Activated CD8-positive, alpha-beta T cell treated with anti-CD3 and anti-CD28 coated beads for 36 hours (primary cell): ENCODE measurements at regions of chr6 and their contacts with region 1.

Region 1: DNA sequence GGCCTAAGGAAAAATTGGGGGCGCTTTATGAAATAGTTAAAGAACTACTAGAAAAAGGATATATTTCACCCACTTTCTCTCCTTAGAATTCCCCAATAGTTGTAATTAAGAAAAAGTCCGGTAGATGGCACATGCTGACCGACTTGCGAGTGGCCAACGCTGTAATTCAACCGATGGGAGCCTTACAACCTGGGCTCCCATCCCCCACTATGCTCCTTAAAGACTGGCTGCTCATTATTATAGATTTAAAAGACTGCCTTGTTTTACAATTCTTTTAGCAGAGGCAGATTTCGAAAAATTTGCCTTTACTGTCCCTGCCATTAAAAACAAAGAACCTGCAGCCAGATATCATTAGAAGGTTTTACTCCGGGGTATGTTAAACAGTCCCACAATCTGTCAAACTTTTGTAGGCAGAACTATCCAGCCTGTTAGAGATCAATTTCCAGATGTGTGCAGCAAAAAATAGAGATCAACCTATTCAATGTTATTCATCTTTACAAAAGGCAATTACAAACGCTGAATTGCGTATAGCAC is 58.5 kb upstream of the PRSS16 start:
- DNase-seq: peak; percentile 73
- ATAC-seq: peak; percentile 89
- H3K4me3 Mint-ChIP-seq: peak overlapping the region; percentile 93
- H3K27ac Mint-ChIP-seq: peak overlapping the region; percentile 72
- H3K4me1 Mint-ChIP-seq: peaks cover 7% of the 10 kb centered on the region
- H3K27me3 Mint-ChIP-seq: peaks cover 1% of the 10 kb centered on the region
- CTCF ChIP-seq: peak; percentile 85

Region 2: GRCh38 chr6:27121640-27122039 is 67.3 kb before region 1 on chr6:
- CTCF ChIA-PET with region 1: no interaction called
- POLR2A ChIA-PET with region 1: no interaction called
- intact Hi-C with region 1: no loop called
- DNase-seq: no peak
- ATAC-seq: no peak
- H3K4me3 Mint-ChIP-seq: no peak overlapping the region
- H3K27ac Mint-ChIP-seq: no peak overlapping the region
- H3K4me1 Mint-ChIP-seq: peaks cover 12% of the 10 kb centered on the region
- H3K27me3 Mint-ChIP-seq: no peaks in the 10 kb centered on the region
- CTCF ChIP-seq: no peak

Region 3: DNA sequence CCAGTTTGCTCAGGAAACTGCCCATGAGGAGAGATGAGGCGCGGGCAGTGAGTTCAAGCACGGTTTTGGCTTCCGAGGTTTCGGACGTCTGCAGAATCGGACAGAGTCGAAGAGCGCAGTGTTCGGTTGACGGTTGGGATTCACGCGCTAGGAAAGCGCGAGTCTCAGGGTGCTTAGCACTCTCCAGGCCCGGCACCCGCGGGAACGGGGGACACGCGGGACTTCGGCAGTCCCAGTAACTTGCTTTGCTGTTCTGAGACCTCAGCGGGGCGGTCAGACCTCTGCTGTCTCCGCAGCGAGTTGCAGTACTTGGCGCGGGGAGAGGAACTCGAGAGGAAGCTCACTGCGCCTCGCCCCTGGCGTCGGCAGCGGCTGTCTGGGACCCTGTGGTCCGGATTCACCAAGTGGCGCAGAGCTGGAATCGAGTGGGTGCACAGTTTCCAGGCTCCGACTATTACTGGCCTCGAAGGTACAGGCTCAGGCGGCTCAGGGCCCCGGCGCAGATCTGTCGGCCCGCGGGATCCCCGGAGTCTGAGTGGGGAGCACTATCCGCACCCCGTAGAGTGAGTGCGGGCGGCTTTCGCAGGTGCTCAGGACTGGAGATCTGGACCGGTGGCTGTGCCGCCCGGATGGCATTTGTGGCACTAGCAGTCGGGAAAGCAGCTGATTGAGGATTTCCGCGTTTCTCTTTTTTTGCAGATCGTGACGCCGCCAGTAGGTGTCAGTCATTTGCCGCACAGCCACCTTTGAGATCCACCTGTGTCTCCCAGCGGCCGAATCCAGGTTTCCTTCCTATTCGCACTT is 123.4 kb after region 1 on chr6 and contains the start of gene POM121L2:
- CTCF ChIA-PET with region 1: interaction called, 7 read pairs
- POLR2A ChIA-PET with region 1: interaction called, 3 read pairs
- intact Hi-C with region 1: loop called (anchors 5 kb)
- DNase-seq: peak; percentile 72
- ATAC-seq: peak; percentile 74
- H3K4me3 Mint-ChIP-seq: peak within 1 kb of the TSS; percentile 75
- H3K27ac Mint-ChIP-seq: no peak within 1 kb of the TSS
- H3K4me1 Mint-ChIP-seq: peaks cover 5% of the 10 kb centered on the region
- H3K27me3 Mint-ChIP-seq: peaks cover 62% of the 10 kb centered on the region
- CTCF ChIP-seq: peak; percentile 84
- total RNA-seq, gene POM121L2: not detected